MCF 10A (cell line): ENCODE measurements at regions of chr9 and their contacts with region 1.

Region 1: GRCh38 chr9:73009649-73010288 is 56.9 kb upstream of the ALDH1A1 start:
- DNase-seq: no peak
- H3K4me3 Mint-ChIP-seq: no peak overlapping the region
- H3K27ac Mint-ChIP-seq: no peak overlapping the region
- H3K4me1 Mint-ChIP-seq: no peaks in the 10 kb centered on the region
- H3K27me3 Mint-ChIP-seq: peaks cover 82% of the 10 kb centered on the region
- CTCF ChIP-seq: no peak

Region 2: DNA sequence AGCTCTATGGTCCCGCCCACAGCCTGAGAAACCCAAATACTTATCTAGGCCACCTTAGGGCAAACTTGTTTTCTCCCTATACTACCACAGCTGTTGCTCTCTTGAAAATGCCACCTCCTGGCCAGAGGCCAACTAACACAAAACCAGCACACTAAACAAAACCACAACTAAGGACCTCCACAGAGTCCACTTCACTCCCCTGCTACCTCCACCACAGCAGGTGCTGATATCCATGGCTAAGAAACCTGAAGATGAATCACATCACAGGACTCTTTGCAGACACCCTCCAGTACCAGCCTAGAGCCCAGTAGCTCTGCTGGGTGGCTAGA is 165.4 kb before region 1 on chr9:
- CTCF ChIA-PET with region 1: no interaction called
- POLR2A ChIA-PET with region 1: no interaction called
- intact Hi-C with region 1: no loop called
- DNase-seq: no peak
- H3K4me3 Mint-ChIP-seq: no peak overlapping the region
- H3K27ac Mint-ChIP-seq: no peak overlapping the region
- H3K4me1 Mint-ChIP-seq: no peaks in the 10 kb centered on the region
- H3K27me3 Mint-ChIP-seq: peaks cover 56% of the 10 kb centered on the region
- CTCF ChIP-seq: no peak

Region 3: GRCh38 chr9:72997387-72997995 is 12.3 kb before region 1 on chr9:
- CTCF ChIA-PET with region 1: no interaction called
- POLR2A ChIA-PET with region 1: no interaction called
- intact Hi-C with region 1: no loop called
- DNase-seq: no peak
- H3K4me3 Mint-ChIP-seq: no peak overlapping the region
- H3K27ac Mint-ChIP-seq: no peak overlapping the region
- H3K4me1 Mint-ChIP-seq: no peaks in the 10 kb centered on the region
- H3K27me3 Mint-ChIP-seq: peaks cover 33% of the 10 kb centered on the region
- CTCF ChIP-seq: no peak

Region 4: GRCh38 chr9:73023025-73023541 is 13.3 kb after region 1 on chr9:
- CTCF ChIA-PET with region 1: interaction called, 15 read pairs
- POLR2A ChIA-PET with region 1: no interaction called
- intact Hi-C with region 1: no loop called
- DNase-seq: peak; percentile 81
- H3K4me3 Mint-ChIP-seq: no peak overlapping the region
- H3K27ac Mint-ChIP-seq: no peak overlapping the region
- H3K4me1 Mint-ChIP-seq: no peaks in the 10 kb centered on the region
- H3K27me3 Mint-ChIP-seq: peaks cover 72% of the 10 kb centered on the region
- CTCF ChIP-seq: peak; percentile 78

Region 5: GRCh38 chr9:73093740-73094379 is 84.1 kb after region 1 on chr9:
- CTCF ChIA-PET with region 1: no interaction called
- POLR2A ChIA-PET with region 1: no interaction called
- intact Hi-C with region 1: no loop called
- DNase-seq: no peak
- H3K4me3 Mint-ChIP-seq: peak overlapping the region; percentile 43
- H3K27ac Mint-ChIP-seq: no peak overlapping the region
- H3K4me1 Mint-ChIP-seq: no peaks in the 10 kb centered on the region
- H3K27me3 Mint-ChIP-seq: peaks cover 11% of the 10 kb centered on the region
- CTCF ChIP-seq: no peak